ENCODE measurements at regions of chr5 and their contacts with region 1.

Region 1: DNA sequence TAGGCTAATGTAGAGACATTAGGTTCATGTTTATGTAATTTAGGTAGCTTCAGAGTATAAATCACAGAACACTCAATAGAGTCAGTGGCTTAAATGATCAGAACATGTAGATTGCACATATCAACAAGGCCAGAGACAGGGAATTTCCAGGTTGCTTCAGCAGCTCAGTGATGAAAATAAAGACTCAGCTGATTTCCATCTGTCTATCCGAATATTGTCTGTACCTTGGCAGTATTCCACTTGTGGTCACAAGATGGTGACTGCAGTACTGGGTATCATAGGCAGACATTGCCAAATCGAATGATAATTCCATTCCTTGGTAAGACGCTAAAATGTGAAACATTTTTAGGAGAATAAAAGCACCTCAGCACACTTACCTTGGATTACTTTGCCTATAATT is 702.2 kb downstream of the MAT2B start:
- DNase-seq: no peak
- H3K4me3 ChIP-seq: no peak overlapping the region
- H3K27ac ChIP-seq: no peak overlapping the region
- H3K4me1 ChIP-seq: no peaks in the 10 kb centered on the region
- H3K27me3 ChIP-seq: no peaks in the 10 kb centered on the region
- CTCF ChIP-seq: no peak
- POLR2A ChIP-seq: no peak

Region 2: GRCh38 chr5:164753434-164753833 is 545.8 kb after region 1 on chr5:
- intact Hi-C with region 1: loop called (anchors 5 kb)
- DNase-seq: no peak
- H3K4me3 ChIP-seq: no peak overlapping the region
- H3K27ac ChIP-seq: no peak overlapping the region
- H3K4me1 ChIP-seq: no peaks in the 10 kb centered on the region
- H3K27me3 ChIP-seq: no peaks in the 10 kb centered on the region
- CTCF ChIP-seq: no peak
- POLR2A ChIP-seq: no peak

Measured in breast epithelium (tissue), 4 donors.